ENCODE measurements at regions of chr15 and their contacts with region 1.

Region 1: DNA sequence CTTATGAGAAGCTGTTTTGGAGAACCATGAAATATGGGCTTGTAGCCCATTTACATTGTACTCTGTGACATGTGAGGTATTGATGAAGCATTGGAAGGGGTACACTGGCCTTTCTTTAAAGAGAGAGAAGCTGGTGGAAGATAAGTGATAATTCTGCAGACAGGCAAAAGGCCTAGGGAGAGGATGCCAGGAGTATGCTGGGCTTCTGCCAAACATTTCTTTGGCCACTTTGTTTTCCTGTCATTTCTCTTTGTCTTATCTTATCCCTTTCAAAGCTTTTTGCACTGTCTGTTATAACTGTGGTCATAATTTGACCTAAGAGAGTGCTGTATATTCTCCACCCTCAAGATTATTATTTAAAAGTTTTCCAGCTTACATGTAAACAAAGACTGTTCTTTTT is 109.6 kb upstream of the SEMA6D start:
- DNase-seq: peak; percentile 33
- H3K4me3 ChIP-seq: no peak overlapping the region
- H3K27ac ChIP-seq: peak overlapping the region in 1 of 2 experiments; percentile 76; a peak in 2 of 4 replicates
- H3K4me1 ChIP-seq: peaks cover 0 to 8% of the 10 kb centered on the region in 2 experiments; a peak in 3 of 4 replicates
- H3K27me3 ChIP-seq: no peaks in the 10 kb centered on the region
- CTCF ChIP-seq: no peak
- EP300 ChIP-seq: no peak
- RAD21 ChIP-seq: no peak

Region 2: DNA sequence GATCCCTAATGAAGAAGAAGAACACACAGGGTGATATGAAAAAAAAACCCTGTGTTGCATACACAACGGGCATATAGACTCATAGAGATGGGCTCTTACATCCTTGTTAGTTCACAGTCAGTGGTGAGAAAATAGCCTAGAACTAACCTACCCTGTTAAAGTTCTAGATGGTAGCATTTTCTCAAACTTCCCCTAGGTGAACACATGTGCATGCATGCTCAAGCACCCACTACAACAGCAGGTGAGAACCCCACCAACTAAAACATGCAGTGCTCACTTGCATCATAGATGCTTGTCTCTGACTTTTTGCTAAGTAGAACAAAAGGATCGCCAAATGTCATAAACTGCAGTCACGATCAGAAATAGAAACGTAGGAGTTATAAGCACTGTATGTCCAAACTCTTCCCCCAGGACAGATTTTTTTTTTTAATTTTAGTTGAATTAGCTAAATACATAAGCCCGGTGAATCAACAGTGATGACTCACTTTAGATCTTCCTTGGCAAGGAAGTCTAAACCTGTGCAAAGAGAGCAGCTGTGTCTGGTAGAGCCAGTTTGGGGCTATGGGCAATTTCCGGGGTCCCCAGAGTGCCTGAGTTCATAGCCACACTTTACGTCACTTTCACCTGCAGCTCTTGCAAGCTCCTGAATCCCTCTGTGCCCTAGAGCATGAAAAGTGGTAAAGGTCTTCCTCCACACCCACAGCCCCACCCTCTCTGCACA is 13.4 kb after region 1 on chr15:
- CTCF ChIA-PET with region 1: interaction called, 11 read pairs
- POLR2A ChIA-PET with region 1: no interaction called
- DNase-seq: no peak
- H3K4me3 ChIP-seq: no peak overlapping the region
- H3K27ac ChIP-seq: no peak overlapping the region
- H3K4me1 ChIP-seq: no peaks in the 10 kb centered on the region; a peak in 1 of 4 replicates
- H3K27me3 ChIP-seq: no peaks in the 10 kb centered on the region
- CTCF ChIP-seq: no peak
- EP300 ChIP-seq: no peak
- RAD21 ChIP-seq: no peak